ENCODE measurements at regions of chr6 and their contacts with region 1.

Region 1: DNA sequence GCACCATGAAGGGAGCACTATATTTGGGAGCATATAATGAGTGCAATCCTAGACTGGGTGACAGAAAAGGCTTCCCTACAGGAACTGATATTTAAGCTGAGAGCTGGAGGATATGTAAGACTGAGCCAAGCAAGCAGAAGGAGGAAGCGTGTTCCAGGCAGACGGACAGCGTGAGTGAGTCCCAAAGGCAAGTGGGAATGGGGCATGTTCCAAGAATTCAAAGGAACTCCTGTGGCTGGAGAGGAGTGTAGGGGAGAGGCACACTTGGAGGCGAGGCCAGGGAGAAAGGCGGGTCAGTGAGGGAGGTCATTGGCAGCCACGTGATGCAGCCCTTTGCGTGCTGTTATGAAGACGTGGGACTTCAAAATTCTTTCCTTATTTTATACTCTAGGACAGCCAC is 27.9 kb upstream of the SGK1 start:
- DNase-seq: no peak
- H3K4me3 ChIP-seq: no peak overlapping the region
- H3K4me3 Mint-ChIP-seq: no peak overlapping the region
- H3K27ac Mint-ChIP-seq: no peak overlapping the region
- H3K4me1 ChIP-seq: no peaks in the 10 kb centered on the region
- H3K4me1 Mint-ChIP-seq: no peaks in the 10 kb centered on the region
- H3K27me3 ChIP-seq: no peaks in the 10 kb centered on the region
- H3K27me3 Mint-ChIP-seq: no peaks in the 10 kb centered on the region
- CTCF ChIP-seq: no peak

Region 2: GRCh38 chr6:134253681-134254080 is 92.1 kb before region 1 on chr6:
- CTCF ChIA-PET with region 1: no interaction called
- POLR2A ChIA-PET with region 1: no interaction called
- intact Hi-C with region 1: loop called (anchors 1 kb)
- DNase-seq: peak in 1 of 2 experiments; percentile 5
- H3K4me3 ChIP-seq: no peak overlapping the region
- H3K4me3 Mint-ChIP-seq: no peak overlapping the region
- H3K27ac Mint-ChIP-seq: no peak overlapping the region
- H3K4me1 ChIP-seq: peaks cover 18% of the 10 kb centered on the region
- H3K4me1 Mint-ChIP-seq: peaks cover 22% of the 10 kb centered on the region
- H3K27me3 ChIP-seq: no peaks in the 10 kb centered on the region
- H3K27me3 Mint-ChIP-seq: no peaks in the 10 kb centered on the region
- CTCF ChIP-seq: no peak

Measured in Caco-2 (cell line).